Activated CD8-positive, alpha-beta memory T cell treated with anti-CD3 and anti-CD28 coated beads, Interleukin-2, amount 10 ng/mL, durations not matched to agents 7 days and 5 days (primary cell): ENCODE measurements at regions of chr2 and their contacts with region 1.

Region 1: DNA sequence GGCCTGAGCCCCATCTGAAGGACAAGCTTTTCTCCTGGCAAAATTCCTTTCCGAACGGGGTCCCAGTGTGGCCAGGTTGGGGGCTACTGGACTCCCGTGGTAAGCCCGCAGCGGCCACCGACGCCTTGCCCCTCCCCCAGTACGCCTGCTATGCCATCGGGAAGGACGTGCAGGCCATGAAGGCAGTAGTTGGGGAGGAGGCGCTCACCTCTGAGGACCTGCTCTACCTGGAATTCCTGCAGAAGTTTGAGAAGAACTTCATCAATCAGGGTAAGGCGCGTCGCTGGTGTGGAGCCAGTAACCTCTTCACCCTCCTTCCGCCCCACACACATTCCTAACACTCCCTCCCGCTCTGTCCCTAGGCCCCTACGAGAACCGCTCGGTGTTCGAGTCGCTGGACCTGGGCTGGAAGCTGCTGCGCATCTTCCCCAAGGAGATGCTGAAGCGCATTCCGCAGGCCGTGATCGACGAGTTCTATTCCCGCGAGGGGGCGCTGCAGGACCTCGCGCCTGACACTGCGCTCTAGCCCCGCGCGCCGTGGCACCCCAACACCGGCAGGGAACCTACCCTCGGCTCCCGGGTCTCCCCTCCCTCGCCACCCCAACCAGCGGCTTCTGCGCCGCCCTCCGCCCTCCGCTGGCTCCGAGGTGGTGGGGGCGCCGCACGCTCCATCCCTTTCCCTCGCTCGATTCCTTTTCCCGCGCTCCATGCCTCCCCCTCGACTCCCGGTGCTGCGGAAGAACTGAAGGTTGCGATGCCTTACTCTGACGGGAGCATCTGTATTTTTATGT is 13.6 kb upstream of the ANKRD53 start:
- DNase-seq: peak; percentile 86
- ATAC-seq: peak; percentile 98
- H3K4me3 Mint-ChIP-seq: peak overlapping the region; percentile 83
- H3K27ac Mint-ChIP-seq: no peak overlapping the region
- H3K4me1 Mint-ChIP-seq: peaks cover 8% of the 10 kb centered on the region
- H3K27me3 Mint-ChIP-seq: peaks cover 39% of the 10 kb centered on the region

Region 2: GRCh38 chr2:70367722-70368323 is 597.0 kb before region 1 on chr2:
- CTCF ChIA-PET with region 1: no interaction called
- DNase-seq: no peak
- ATAC-seq: no peak
- H3K4me3 Mint-ChIP-seq: no peak overlapping the region
- H3K27ac Mint-ChIP-seq: no peak overlapping the region
- H3K4me1 Mint-ChIP-seq: no peaks in the 10 kb centered on the region
- H3K27me3 Mint-ChIP-seq: peaks cover 4% of the 10 kb centered on the region

Region 3: DNA sequence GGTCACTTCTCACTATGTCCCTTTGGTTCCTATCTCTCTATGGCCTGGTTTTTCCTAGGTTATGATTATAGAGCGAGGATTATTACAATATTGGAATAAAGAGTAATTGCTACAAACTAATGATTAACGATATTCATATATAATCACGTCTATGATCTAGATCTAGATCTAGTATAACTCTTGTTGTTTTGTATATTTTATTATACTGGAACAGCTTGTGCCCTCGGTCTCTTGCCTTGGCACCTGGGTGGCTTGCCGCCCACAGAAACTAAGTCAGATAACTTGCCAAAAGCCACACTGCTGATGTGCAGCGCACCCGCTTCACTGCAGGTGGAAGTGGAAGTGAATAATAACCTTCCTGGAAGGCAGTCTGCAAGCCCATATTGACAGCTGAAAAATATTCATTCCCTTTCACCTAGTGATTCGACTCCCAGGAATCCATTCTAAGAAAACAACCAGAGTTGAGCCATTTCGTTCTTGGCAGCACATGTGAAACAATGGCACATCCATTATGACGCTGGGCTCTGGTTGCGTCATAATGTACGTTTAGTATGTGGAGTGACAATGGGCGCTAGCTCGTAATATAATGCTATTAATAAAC is 12.9 kb after region 1 on chr2:
- CTCF ChIA-PET with region 1: interaction called, 58 read pairs
- DNase-seq: peak; percentile 43
- ATAC-seq: peak; percentile 20
- H3K4me3 Mint-ChIP-seq: peak overlapping the region; percentile 78
- H3K27ac Mint-ChIP-seq: peak overlapping the region; percentile 80
- H3K4me1 Mint-ChIP-seq: peaks cover 14% of the 10 kb centered on the region
- H3K27me3 Mint-ChIP-seq: peaks cover 9% of the 10 kb centered on the region

Region 4: DNA sequence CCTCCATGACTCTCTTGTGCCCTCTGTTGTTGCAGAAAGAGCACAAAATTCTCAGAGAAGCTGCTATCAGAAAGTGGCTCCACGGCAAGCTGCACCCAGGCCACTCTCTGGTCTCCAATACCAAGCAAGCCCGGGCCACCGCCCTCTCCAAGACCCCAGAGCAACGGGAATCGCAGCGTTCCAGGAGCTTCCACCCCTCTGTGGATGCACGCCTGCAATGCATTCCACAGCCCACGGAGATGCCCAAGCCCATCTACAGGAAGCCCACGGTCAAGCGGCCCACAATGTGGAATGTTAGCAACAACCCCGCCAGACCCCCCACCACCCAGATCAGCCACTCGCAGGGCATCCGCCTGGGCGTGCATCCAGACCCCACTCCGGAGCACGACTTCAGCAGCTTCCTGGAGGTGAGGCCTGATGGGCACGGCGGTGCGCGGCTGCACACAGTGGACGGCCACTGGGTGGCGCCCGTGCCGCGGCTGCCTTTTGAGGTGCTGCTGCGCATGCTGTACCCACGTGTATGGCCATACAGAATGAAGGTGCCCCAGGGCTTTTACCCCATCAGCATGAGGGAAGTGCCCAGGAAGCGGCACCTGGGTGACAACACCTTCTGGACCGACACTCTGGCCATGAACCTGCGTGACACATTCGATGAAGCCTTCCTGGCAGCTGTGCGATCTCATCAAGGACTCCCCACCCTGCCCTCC is 19.9 kb after region 1 on chr2:
- CTCF ChIA-PET with region 1: interaction called, 58 read pairs
- DNase-seq: peak; percentile 88
- ATAC-seq: peak; percentile 99
- H3K4me3 Mint-ChIP-seq: no peak overlapping the region
- H3K27ac Mint-ChIP-seq: no peak overlapping the region
- H3K4me1 Mint-ChIP-seq: peaks cover 13% of the 10 kb centered on the region
- H3K27me3 Mint-ChIP-seq: no peaks in the 10 kb centered on the region

Region 5: DNA sequence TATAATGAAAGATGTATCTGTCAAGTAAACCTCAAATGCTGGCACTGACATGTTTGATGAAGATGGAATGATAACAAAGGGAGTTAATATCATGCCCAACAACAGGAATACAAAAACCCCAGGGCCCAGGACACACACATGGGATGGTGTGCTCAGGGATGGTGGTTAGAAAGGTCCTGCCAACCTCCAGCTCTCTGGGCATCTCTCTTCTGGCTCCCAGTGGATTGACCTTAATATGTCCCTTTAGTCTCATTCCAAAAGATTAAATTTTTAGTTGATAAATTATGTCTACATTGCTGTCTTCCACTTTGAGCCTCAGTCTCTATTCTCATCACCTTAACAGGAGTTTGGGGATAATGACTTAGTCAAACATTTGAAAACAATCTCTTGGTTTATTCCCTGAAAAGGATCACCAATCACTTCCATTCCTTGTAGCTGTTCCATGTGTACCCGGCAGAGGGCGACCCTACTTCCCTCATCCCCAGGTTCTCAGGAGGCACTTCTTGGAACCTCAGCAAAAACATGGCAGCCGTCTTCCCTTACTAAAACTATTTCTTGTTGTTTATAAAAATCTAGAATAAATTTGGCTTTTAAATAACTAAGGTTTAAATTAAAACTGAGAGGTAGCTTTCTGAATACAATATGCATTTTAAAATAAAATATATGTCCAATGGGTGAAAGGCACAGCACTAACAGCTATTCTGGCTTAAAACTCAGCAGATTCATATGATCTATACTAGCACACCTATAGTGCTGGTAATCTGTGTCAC is 135.6 kb after region 1 on chr2:
- CTCF ChIA-PET with region 1: no interaction called
- DNase-seq: peak; percentile 59
- ATAC-seq: no peak
- H3K4me3 Mint-ChIP-seq: no peak overlapping the region
- H3K27ac Mint-ChIP-seq: no peak overlapping the region
- H3K4me1 Mint-ChIP-seq: peaks cover 4% of the 10 kb centered on the region
- H3K27me3 Mint-ChIP-seq: peaks cover 10% of the 10 kb centered on the region

Region 6: GRCh38 chr2:71150082-71150816 is 185.5 kb after region 1 on chr2:
- CTCF ChIA-PET with region 1: no interaction called
- DNase-seq: no peak
- ATAC-seq: no peak
- H3K4me3 Mint-ChIP-seq: no peak overlapping the region
- H3K27ac Mint-ChIP-seq: no peak overlapping the region
- H3K4me1 Mint-ChIP-seq: no peaks in the 10 kb centered on the region
- H3K27me3 Mint-ChIP-seq: no peaks in the 10 kb centered on the region